Transverse colon (tissue), 4 donors: ENCODE measurements at regions of chr11 and their contacts with region 1.

Region 1: GRCh38 chr11:10307442-10308207 is 2.8 kb downstream of the ADM start:
- DNase-seq: peak; percentile 89
- H3K4me3 ChIP-seq: peak overlapping the region; percentile 48 to 74 (median 60)
- H3K27ac ChIP-seq: peak overlapping the region; percentile 90 to 96 (median 92)
- H3K4me1 ChIP-seq: peaks cover 13 to 60% (median 41%) of the 10 kb centered on the region in 4 donors
- H3K27me3 ChIP-seq: peaks cover 3% of the 10 kb centered on the region
- CTCF ChIP-seq: peak; percentile 98 to 100 (median 100)
- EP300 ChIP-seq: no peak
- POLR2A ChIP-seq: peak; percentile 53

Region 2: GRCh38 chr11:9861860-9862725 is 445.5 kb before region 1 on chr11:
- in situ Hi-C with region 1: loop called in 2 of 4 experiments (anchors 25 kb)
- intact Hi-C with region 1: no loop called
- DNase-seq: peak; percentile 57
- H3K4me3 ChIP-seq: no peak overlapping the region
- H3K27ac ChIP-seq: no peak overlapping the region
- H3K4me1 ChIP-seq: peaks cover 0 to 11% (median 2%) of the 10 kb centered on the region in 4 donors
- H3K27me3 ChIP-seq: no peaks in the 10 kb centered on the region
- CTCF ChIP-seq: peak; percentile 65 to 74 (median 69)
- EP300 ChIP-seq: no peak
- POLR2A ChIP-seq: no peak

Region 3: DNA sequence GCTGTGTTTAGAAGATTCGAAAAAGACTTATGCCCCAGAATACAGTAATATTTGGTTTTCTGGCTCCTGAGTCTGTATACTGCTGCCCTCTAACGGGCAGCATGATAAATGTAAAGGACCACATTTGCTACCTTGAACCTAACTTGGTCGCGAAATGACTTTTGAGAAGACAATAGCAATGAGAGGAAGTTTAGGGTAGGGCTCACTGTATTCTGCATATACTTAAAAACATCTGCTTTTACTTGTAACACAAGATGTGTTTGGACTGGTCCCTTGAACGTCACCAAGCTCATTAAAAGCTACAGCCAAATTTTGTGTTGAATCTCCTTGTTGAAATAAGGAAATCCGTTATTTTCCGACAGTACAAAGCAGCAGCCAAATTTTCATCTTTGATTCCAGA is 334.6 kb before region 1 on chr11:
- in situ Hi-C with region 1: no loop called
- intact Hi-C with region 1: loop called (anchors 10 kb)
- DNase-seq: no peak
- H3K4me3 ChIP-seq: no peak overlapping the region
- H3K27ac ChIP-seq: no peak overlapping the region
- H3K4me1 ChIP-seq: no peaks in the 10 kb centered on the region
- H3K27me3 ChIP-seq: no peaks in the 10 kb centered on the region
- CTCF ChIP-seq: peak; percentile 63 to 65 (median 64)
- EP300 ChIP-seq: no peak
- POLR2A ChIP-seq: no peak